ENCODE measurements at regions of chr19 and their contacts with region 1.

Region 1: GRCh38 chr19:48468775-48469288 is 337 bp upstream of the CYTH2 start:
- DNase-seq: peak; percentile 100
- H3K4me3 Mint-ChIP-seq: peak overlapping the region; percentile 90
- H3K27ac Mint-ChIP-seq: peak overlapping the region; percentile 88
- H3K4me1 Mint-ChIP-seq: peaks cover 12% of the 10 kb centered on the region
- H3K27me3 Mint-ChIP-seq: no peaks in the 10 kb centered on the region

Region 2: GRCh38 chr19:48363810-48364563 is 104.8 kb before region 1 on chr19 and contains the starts of genes SYNGR4 and TMEM143:
- intact Hi-C with region 1: loop called (anchors 1 kb)
- DNase-seq: peak; percentile 98
- H3K4me3 Mint-ChIP-seq: peak within 1 kb of the TSS; percentile 85
- H3K27ac Mint-ChIP-seq: peak within 1 kb of the TSS; percentile 87
- H3K4me1 Mint-ChIP-seq: peaks cover 6% of the 10 kb centered on the region
- H3K27me3 Mint-ChIP-seq: no peaks in the 10 kb centered on the region
- total RNA-seq, gene SYNGR4: 0.61 TPM in 1 of 2 replicates, not detected in the other
- total RNA-seq, gene TMEM143: 7.7 and 14.9 TPM in 2 replicates

Region 3: GRCh38 chr19:48492925-48493717 is 24.3 kb after region 1 on chr19:
- intact Hi-C with region 1: loop called (anchors 1 kb)
- DNase-seq: peak; percentile 82
- H3K4me3 Mint-ChIP-seq: peak overlapping the region; percentile 68
- H3K27ac Mint-ChIP-seq: peak overlapping the region; percentile 29
- H3K4me1 Mint-ChIP-seq: peaks cover 27% of the 10 kb centered on the region
- H3K27me3 Mint-ChIP-seq: peaks cover 21% of the 10 kb centered on the region

Region 4: GRCh38 chr19:48618916-48619691 is 150.3 kb after region 1 on chr19 and contains the starts of genes RPL18 and SPHK2:
- intact Hi-C with region 1: loop called (anchors 1 kb)
- DNase-seq: peak; percentile 94
- H3K4me3 Mint-ChIP-seq: peak within 1 kb of the TSS; percentile 99
- H3K27ac Mint-ChIP-seq: peak within 1 kb of the TSS; percentile 100
- H3K4me1 Mint-ChIP-seq: peaks cover 50% of the 10 kb centered on the region
- H3K27me3 Mint-ChIP-seq: no peaks in the 10 kb centered on the region
- total RNA-seq, gene RPL18: 1,774 and 1,780 TPM in 2 replicates
- total RNA-seq, gene SPHK2: 40.8 and 44.1 TPM in 2 replicates

Region 5: GRCh38 chr19:48965040-48965805 is 496.4 kb after region 1 on chr19 and contains the start of gene FTL:
- intact Hi-C with region 1: loop called (anchors 1 kb)
- DNase-seq: peak; percentile 91
- H3K4me3 Mint-ChIP-seq: peak within 1 kb of the TSS; percentile 95
- H3K27ac Mint-ChIP-seq: peak within 1 kb of the TSS; percentile 96
- H3K4me1 Mint-ChIP-seq: peaks cover 58% of the 10 kb centered on the region
- H3K27me3 Mint-ChIP-seq: no peaks in the 10 kb centered on the region
- total RNA-seq, gene FTL: 651 and 662 TPM in 2 replicates